Cardiac septum (tissue), 1 donor: ENCODE measurements at regions of chr18 and their contacts with region 1.

Region 1: GRCh38 chr18:72762515-72763122 is 105.2 kb downstream of the NETO1 start:
- DNase-seq: no peak

Region 2: DNA sequence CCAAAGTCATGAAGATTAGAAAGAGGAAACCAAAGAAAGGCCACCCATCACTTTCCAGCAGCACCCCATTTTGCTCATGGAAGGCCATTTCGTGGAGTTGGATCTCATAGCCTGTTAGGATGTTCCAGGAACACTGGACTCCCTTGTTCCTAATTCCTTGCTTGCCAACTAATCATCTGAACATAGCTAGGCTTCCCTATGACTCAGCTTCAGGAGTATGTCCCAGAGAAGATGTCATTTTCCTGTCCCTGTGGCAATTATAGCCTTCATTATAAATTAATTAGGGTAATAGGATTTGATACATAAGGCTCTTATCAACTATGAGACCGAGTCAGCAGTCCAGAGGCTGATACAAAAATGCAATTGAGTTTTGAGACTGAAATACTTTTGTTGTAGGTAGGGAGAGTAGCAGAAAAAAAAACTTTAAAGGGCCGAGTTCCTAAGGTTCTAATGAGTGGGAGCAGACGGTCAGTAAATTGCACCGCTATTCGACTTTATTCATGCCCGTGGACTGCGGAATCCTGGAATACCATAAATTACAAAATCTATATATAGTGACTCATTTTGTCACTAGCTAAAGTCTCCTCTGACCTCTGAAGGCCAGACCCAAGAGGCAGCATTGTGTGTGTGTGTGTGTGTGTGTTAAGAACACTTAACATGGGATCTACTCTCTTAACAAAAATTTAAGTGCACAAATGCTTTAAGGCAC is 1073.2 kb after region 1 on chr18:
- intact Hi-C with region 1: loop called (anchors 5 kb)
- DNase-seq: no peak